Gastrocnemius medialis (tissue), 4 donors: ENCODE measurements at regions of chr6 and their contacts with region 1.

Region 1: DNA sequence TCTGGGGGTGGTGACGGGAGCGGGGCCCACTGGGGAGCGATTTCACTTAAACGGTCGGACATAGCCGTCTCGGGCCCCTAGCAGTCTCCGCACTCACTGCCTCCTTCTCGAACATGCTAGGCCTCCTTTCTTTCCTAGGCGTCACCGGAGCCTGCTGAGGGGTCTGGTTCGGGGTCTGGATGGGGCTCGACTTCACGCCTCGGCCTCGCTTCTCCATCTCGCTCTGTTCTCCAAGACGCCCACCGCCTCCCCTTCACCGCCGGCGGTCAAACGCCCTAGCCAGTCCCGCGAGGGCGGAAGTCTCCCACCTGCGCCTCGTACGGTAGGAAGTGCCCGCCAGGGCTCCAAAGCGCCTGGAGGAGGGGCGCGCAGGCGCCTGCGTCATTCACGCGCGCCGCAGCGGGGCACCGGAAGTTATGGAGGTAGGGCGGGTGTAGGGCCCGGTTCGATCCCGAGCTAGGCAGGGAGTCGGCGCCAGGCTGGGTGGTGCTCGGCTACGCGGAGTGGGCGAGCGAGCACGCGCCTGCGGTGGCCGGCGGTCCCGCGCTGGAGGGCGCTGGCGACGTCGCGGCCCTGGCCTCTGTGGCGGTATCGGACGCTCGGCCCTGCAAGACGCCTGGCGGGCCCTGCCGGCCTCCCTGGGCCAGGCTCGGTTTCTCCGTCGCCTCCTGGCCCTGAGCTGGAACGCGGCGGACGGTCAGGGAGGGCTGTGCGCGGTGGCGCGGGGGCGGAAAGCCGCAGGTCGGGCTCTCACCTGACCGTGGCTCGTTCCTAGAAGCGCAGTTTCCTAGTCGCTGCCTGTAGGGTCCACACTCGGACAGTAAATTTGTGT is at the starts of genes DYNLT2 and ERMARD:
- DNase-seq: peak; percentile 85 to 93
- ATAC-seq: peak; percentile 97 to 98
- H3K4me3 ChIP-seq: peak within 1 kb of the TSS; percentile 64 to 81 (median 70)
- H3K27ac ChIP-seq: peak within 1 kb of the TSS; percentile 91 to 94 (median 92)
- H3K4me1 ChIP-seq: peaks cover 20% of the 10 kb centered on the region in 2 donors
- H3K27me3 ChIP-seq: no peaks in the 10 kb centered on the region
- CTCF ChIP-seq: peak; percentile 39 to 59 (median 47)
- POLR2A ChIP-seq: peak; percentile 81 to 89
- total RNA-seq, gene DYNLT2: 0.23 to 1.1 (median 0.46) TPM
- total RNA-seq, gene ERMARD: 9.0 to 18.9 (median 11.2) TPM

Region 2: GRCh38 chr6:169604076-169604475 is 147.4 kb before region 1 on chr6:
- in situ Hi-C with region 1: no loop called
- intact Hi-C with region 1: no loop called
- DNase-seq: no peak
- ATAC-seq: no peak
- H3K4me3 ChIP-seq: no peak overlapping the region
- H3K27ac ChIP-seq: no peak overlapping the region
- H3K4me1 ChIP-seq: no peaks in the 10 kb centered on the region
- H3K27me3 ChIP-seq: no peaks in the 10 kb centered on the region
- CTCF ChIP-seq: no peak
- POLR2A ChIP-seq: no peak

Region 3: DNA sequence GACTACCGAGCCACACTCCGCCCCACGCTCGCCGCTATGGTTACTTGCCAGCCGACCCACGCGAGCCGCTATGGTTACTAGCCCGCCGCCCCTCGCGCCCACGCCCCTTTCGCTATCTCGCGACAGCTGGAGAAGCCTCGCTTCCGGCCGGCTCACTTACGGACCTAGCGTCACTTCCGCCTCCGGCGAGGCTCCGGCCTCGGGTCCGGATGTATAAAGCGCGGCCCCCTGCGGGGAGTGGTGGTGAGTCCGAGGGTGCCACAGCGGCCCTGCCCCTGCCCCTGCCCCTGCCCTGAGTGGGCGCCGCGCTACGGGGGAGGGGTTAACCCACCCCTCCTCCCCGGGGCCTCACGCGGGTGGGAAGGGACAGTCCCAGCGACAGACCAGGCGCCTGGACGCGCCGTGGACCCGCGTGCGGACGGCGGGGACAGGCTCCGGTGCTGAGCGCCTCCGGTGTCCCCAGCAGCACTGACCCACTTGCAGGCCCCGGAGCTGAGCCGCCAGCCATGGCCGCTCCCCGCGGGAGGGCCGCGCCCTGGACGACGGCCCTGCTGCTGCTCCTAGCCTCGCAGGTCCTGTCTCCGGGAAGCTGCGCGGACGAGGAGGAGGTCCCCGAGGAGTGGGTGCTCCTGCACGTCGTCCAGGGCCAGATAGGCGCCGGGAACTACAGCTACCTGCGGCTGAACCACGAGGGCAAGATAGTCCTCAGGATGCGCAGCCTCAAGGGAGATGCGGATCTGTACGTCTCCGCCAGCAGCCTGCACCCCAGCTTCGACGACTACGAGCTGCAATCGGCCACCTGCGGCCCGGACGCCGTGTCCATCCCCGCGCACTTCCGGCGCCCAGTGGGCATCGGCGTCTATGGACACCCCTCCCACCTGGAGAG is 49.3 kb before region 1 on chr6 and contains the starts of genes C6orf120 and WDR27:
- in situ Hi-C with region 1: no loop called
- intact Hi-C with region 1: loop called (anchors 1 kb)
- DNase-seq: peak; percentile 88 to 92
- ATAC-seq: peak; percentile 92 to 95
- H3K4me3 ChIP-seq: peak within 1 kb of the TSS; percentile 88 to 93 (median 90)
- H3K27ac ChIP-seq: peak within 1 kb of the TSS; percentile 87 to 97 (median 95)
- H3K4me1 ChIP-seq: peaks cover 36 to 51% of the 10 kb centered on the region in 2 donors
- H3K27me3 ChIP-seq: no peaks in the 10 kb centered on the region
- CTCF ChIP-seq: no peak
- POLR2A ChIP-seq: peak; percentile 92 to 94
- total RNA-seq, gene C6orf120: 23.8 to 41.4 (median 29.4) TPM
- total RNA-seq, gene WDR27: 2.8 to 31.6 (median 4.0) TPM

Region 4: DNA sequence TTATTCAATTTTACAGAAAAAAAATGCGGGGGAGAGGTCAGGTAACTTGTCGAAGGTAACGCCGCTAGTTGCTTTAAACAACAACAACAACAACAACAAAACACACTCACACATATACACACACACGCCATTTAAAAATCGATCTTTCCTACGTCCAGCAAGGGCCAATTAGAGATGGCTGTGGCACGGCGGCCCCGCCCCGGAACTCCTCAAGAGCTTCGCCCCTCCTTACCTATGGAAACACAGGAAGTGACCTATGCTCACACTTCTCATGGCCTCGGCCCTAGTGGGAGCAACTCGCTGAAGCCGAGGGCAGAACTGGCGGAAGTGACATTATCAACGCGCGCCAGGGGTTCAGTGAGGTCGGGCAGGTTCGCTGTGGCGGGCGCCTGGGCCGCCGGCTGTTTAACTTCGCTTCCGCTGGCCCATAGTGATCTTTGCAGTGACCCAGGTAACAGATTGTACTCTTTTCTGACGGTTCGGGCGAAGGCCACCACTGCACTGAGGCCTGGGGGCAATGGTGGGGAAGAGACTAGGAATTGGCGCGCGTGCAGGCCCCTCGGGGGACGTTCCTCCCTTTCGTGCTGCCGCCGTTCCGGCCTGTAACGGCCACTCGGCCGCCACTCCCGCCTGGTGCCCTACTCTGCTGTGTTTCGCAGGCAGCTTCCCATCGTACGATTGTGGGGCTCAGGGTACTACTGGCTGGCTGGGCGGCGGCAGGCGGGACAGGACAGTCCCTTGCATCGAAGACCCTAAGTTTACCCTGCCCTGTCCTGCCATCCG is 802.7 kb after region 1 on chr6 and contains the start of gene TBP:
- in situ Hi-C with region 1: loop called in 3 of 4 experiments (anchors 10 kb)
- intact Hi-C with region 1: loop called (anchors 1 kb)
- DNase-seq: peak; percentile 98 to 99
- ATAC-seq: peak; percentile 91 to 92
- H3K4me3 ChIP-seq: peak within 1 kb of the TSS; percentile 75 to 95 (median 80)
- H3K27ac ChIP-seq: peak within 1 kb of the TSS; percentile 93 to 98 (median 94)
- H3K4me1 ChIP-seq: peaks cover 45 to 51% of the 10 kb centered on the region in 2 donors
- H3K27me3 ChIP-seq: no peaks in the 10 kb centered on the region
- CTCF ChIP-seq: no peak
- POLR2A ChIP-seq: peak; percentile 37 to 71
- total RNA-seq, gene TBP: 9.7 to 17.3 (median 15.3) TPM

Region 5: GRCh38 chr6:170575250-170575649 is 823.8 kb after region 1 on chr6:
- in situ Hi-C with region 1: no loop called
- intact Hi-C with region 1: no loop called
- DNase-seq: no peak
- ATAC-seq: no peak
- H3K4me3 ChIP-seq: no peak overlapping the region
- H3K27ac ChIP-seq: no peak overlapping the region
- H3K4me1 ChIP-seq: no peaks in the 10 kb centered on the region
- H3K27me3 ChIP-seq: no peaks in the 10 kb centered on the region
- CTCF ChIP-seq: no peak
- POLR2A ChIP-seq: no peak